SK-N-SH (cell line): ENCODE measurements at regions of chr1 and their contacts with region 1.

Region 1: DNA sequence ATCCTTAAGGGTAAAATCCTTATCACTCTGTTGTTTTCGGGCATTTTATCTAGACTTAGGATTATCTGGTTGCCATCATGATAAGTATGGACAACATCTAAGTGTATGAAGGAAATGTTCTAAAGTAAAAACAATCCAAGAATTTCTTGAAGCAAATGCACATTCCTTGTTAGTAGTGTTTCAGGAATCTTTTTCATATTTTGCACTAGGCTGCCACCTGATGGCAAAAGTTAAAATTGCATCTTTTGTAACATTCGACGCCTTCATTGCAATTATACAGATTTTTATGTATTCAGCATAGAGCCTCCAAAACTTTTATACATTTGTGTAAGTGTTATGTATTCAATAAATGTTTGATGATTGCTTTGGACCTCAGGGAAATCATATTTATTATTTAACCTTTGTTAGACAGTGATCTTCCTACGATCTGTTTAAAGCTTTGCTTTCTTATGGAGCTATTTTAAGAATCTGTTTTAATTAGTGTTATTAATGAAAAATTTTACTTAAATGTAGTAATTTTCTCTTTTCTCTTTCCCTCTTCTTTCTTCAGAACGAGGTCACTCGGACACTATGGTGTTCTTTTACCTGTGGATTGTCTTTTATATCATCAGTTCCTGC is 49.4 kb upstream of the KIAA1614 start:
- DNase-seq: peak; percentile 34
- H3K4me3 ChIP-seq: no peak overlapping the region; a peak in 1 of 4 replicates
- H3K27ac ChIP-seq: peak overlapping the region; percentile 23 to 43; a peak in 1 of 4 replicates
- H3K4me1 ChIP-seq: peaks cover 0 to 4% of the 10 kb centered on the region in 2 experiments; a peak in 1 of 4 replicates
- H3K27me3 ChIP-seq: no peaks in the 10 kb centered on the region
- CTCF ChIP-seq: peak; percentile 80
- EP300 ChIP-seq: no peak
- RAD21 ChIP-seq: peak; percentile 92

Region 2: GRCh38 chr1:180343931-180344769 is 519.1 kb before region 1 on chr1:
- CTCF ChIA-PET with region 1: no interaction called
- POLR2A ChIA-PET with region 1: no interaction called
- DNase-seq: peak; percentile 24
- H3K4me3 ChIP-seq: no peak overlapping the region
- H3K27ac ChIP-seq: peak overlapping the region in 1 of 2 experiments; percentile 26; a peak in 2 of 4 replicates
- H3K4me1 ChIP-seq: peaks cover 0 to 7% of the 10 kb centered on the region in 2 experiments; a peak in 3 of 4 replicates
- H3K27me3 ChIP-seq: no peaks in the 10 kb centered on the region
- CTCF ChIP-seq: no peak
- EP300 ChIP-seq: no peak
- RAD21 ChIP-seq: no peak

Region 3: GRCh38 chr1:180515864-180516388 is 347.3 kb before region 1 on chr1:
- CTCF ChIA-PET with region 1: interaction called, 157 read pairs
- POLR2A ChIA-PET with region 1: interaction called, 4 read pairs
- DNase-seq: peak; percentile 83
- H3K4me3 ChIP-seq: no peak overlapping the region; a peak in 1 of 4 replicates
- H3K27ac ChIP-seq: peak overlapping the region; percentile 43 to 87
- H3K4me1 ChIP-seq: peaks cover 0 to 11% of the 10 kb centered on the region in 2 experiments; a peak in 2 of 4 replicates
- H3K27me3 ChIP-seq: no peaks in the 10 kb centered on the region
- CTCF ChIP-seq: peak; percentile 86
- EP300 ChIP-seq: no peak
- RAD21 ChIP-seq: peak; percentile 96

Region 4: DNA sequence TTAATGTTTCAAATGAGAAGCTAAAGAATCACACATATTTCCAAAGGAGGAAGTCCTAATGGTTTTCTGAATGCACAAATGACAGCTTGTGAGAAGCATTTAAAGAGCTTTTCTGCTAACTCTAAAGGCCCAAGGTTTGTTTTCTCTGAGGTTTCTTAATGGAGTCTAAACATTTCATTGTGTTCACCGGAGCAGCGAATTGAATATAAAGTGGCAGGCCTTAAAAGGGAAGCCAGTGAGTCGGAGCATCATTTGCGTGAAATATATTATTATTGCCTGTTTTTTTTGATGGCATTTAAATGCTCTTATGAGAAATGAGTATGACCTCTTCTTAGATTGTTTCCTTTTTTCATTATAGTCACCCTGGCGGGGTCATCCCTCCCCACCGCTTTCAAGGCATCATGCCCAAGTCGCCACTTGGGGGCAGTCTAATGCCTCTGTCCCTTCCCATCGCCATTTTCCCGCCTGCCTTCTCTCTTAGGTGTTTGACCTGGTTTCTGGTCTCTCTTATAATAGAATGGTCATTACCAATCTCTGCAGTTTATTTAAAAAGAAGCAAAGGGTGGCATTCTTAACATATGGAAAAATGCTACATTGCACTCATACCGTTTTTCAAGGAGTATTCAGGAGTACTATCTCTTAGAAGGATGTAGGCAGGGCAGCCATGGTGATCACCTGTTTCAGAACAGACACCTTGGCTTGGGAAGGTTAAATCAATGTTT is 329.8 kb before region 1 on chr1:
- CTCF ChIA-PET with region 1: interaction called, 213 read pairs
- POLR2A ChIA-PET with region 1: no interaction called
- DNase-seq: peak; percentile 72
- H3K4me3 ChIP-seq: no peak overlapping the region; a peak in 1 of 4 replicates
- H3K27ac ChIP-seq: peak overlapping the region in 1 of 2 experiments; percentile 0; a peak in 1 of 4 replicates
- H3K4me1 ChIP-seq: peaks cover 0 to 11% of the 10 kb centered on the region in 2 experiments; a peak in 2 of 4 replicates
- H3K27me3 ChIP-seq: no peaks in the 10 kb centered on the region
- CTCF ChIP-seq: peak; percentile 95
- EP300 ChIP-seq: no peak
- RAD21 ChIP-seq: peak; percentile 97

Region 5: GRCh38 chr1:180594723-180595122 is 268.5 kb before region 1 on chr1:
- CTCF ChIA-PET with region 1: interaction called, 10 read pairs
- POLR2A ChIA-PET with region 1: no interaction called
- DNase-seq: peak; percentile 55
- H3K4me3 ChIP-seq: no peak overlapping the region
- H3K27ac ChIP-seq: peak overlapping the region in 1 of 2 experiments; percentile 76; a peak in 1 of 4 replicates
- H3K4me1 ChIP-seq: peaks cover 0 to 38% of the 10 kb centered on the region in 2 experiments; a peak in 2 of 4 replicates
- H3K27me3 ChIP-seq: no peaks in the 10 kb centered on the region
- CTCF ChIP-seq: no peak
- EP300 ChIP-seq: peak in 1 of 2 experiments; percentile 63; a peak in 2 of 4 replicates
- RAD21 ChIP-seq: no peak

Region 6: DNA sequence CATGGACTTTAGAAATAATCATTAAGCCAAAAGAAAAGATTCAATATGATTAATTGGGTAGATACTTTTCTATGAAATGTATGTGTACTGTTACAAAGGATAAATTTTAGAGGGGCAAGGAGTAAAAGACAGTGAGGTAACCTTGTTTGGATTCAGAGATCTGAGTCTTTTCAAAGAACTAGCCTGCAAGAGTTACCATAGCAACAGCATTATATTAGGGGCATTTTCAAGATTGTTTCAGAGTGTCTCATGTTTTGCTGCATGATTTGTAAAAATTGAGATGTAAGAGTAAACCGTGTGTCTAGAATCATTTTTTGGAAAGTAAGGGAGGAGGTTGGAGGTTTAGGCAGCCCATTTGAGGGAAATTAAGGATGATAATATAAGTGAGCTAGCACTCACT is 21.2 kb before region 1 on chr1:
- CTCF ChIA-PET with region 1: interaction called, 13 read pairs
- POLR2A ChIA-PET with region 1: no interaction called
- DNase-seq: peak; percentile 14
- H3K4me3 ChIP-seq: no peak overlapping the region
- H3K27ac ChIP-seq: peak overlapping the region in 1 of 2 experiments; percentile 71; a peak in 2 of 4 replicates
- H3K4me1 ChIP-seq: peaks cover 4 to 19% of the 10 kb centered on the region in 2 experiments; a peak in 3 of 4 replicates
- H3K27me3 ChIP-seq: no peaks in the 10 kb centered on the region
- CTCF ChIP-seq: no peak
- EP300 ChIP-seq: no peak
- RAD21 ChIP-seq: no peak

Region 7: DNA sequence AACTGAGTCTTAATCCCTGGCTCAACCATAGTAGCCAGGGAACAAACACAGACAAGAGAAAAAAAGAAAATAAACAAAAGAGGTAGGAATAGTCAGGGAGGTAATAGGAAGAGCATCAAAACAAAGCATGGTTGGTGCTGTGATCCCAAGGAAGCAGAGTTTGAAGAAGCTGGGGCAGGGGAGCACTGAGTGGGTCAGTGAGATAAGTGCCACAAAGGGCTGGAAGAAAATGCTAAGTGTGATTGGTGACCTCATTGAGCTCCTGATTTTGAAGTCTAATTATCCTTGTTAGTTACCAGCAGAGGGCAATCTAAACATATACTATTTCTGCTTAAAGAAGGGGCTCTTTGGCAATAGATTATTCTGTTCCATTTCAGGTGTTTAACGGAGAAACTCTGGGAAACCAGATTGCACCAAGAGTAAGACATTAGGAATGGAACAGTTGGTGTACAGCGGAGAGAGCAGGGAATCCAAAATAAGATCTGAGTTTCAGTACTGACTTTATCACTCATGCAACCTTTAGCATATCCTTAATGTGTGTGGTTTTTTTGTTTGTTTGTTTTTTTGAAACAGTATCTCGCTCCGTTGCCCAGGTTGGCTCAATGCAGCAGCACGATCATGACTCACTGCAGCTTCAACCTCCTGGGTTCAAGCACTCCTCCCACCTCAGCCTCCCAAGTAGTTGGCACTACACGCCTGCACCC is 18.7 kb after region 1 on chr1:
- CTCF ChIA-PET with region 1: interaction called, 11 read pairs
- POLR2A ChIA-PET with region 1: no interaction called
- DNase-seq: peak; percentile 65
- H3K4me3 ChIP-seq: no peak overlapping the region; a peak in 1 of 4 replicates
- H3K27ac ChIP-seq: no peak overlapping the region
- H3K4me1 ChIP-seq: no peaks in the 10 kb centered on the region
- H3K27me3 ChIP-seq: no peaks in the 10 kb centered on the region
- CTCF ChIP-seq: peak; percentile 69
- EP300 ChIP-seq: no peak
- RAD21 ChIP-seq: peak; percentile 89